ENCODE measurements at regions of chr20 and their contacts with region 1.

Region 1: DNA sequence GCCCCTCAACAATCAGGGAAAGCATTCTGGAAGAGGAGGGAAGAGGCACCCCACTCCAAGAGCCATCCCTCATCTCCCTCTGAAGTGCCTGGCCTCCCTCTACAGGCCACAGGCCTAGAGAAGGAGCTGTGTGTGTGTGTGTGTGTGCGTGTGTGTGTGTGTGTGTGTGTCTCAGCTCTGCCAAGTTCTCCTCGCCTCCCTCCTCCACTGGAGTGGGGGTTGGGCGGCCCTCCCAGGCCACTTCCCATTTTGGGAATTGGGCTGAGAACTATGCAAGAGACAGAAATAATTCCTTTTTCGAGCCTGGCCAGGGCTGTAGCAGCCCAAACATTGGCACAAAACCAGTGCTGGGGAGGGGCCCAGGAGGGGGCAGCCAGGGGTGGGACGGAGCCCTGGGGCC is 35.7 kb downstream of the KCNB1 start:
- DNase-seq: peak; percentile 86 to 92
- ATAC-seq: peak; percentile 81 to 97 (median 90)
- H3K4me3 ChIP-seq: no peak overlapping the region
- H3K27ac ChIP-seq: peak overlapping the region; percentile 38 to 83 (median 66)
- H3K4me1 ChIP-seq: peaks cover 15 to 51% (median 30%) of the 10 kb centered on the region in 9 donors
- H3K27me3 ChIP-seq: peaks cover 0 to 10% (median 0%) of the 10 kb centered on the region in 7 donors
- CTCF ChIP-seq: peak in 3 of 9 donors; percentile 20 to 44 (median 27)

Region 2: GRCh38 chr20:49122920-49123319 is 323.9 kb before region 1 on chr20:
- intact Hi-C with region 1: no loop called
- DNase-seq: no peak
- ATAC-seq: no peak
- H3K4me3 ChIP-seq: no peak overlapping the region
- H3K27ac ChIP-seq: no peak overlapping the region
- H3K4me1 ChIP-seq: no peaks in the 10 kb centered on the region
- H3K27me3 ChIP-seq: no peaks in the 10 kb centered on the region
- CTCF ChIP-seq: no peak

Region 3: GRCh38 chr20:49384437-49385088 is 62.2 kb before region 1 on chr20:
- intact Hi-C with region 1: loop called in 4 of 10 experiments (anchors 5 to 10 kb)
- DNase-seq: peak; percentile 75 to 81
- ATAC-seq: peak in 6 of 8 donors; percentile 29 to 76 (median 49)
- H3K4me3 ChIP-seq: no peak overlapping the region
- H3K27ac ChIP-seq: no peak overlapping the region
- H3K4me1 ChIP-seq: peaks cover 0 to 46% (median 16%) of the 10 kb centered on the region in 9 donors
- H3K27me3 ChIP-seq: no peaks in the 10 kb centered on the region
- CTCF ChIP-seq: peak; percentile 58 to 81 (median 72)

Region 4: GRCh38 chr20:49400410-49400809 is 46.4 kb before region 1 on chr20:
- intact Hi-C with region 1: loop called in 1 of 10 experiments (anchors 5 kb)
- DNase-seq: peak in 1 of 2 donors; percentile 26
- ATAC-seq: peak; percentile 37 to 91 (median 73)
- H3K4me3 ChIP-seq: no peak overlapping the region
- H3K27ac ChIP-seq: peak overlapping the region; percentile 56 to 89 (median 75)
- H3K4me1 ChIP-seq: peaks cover 12 to 46% (median 26%) of the 10 kb centered on the region in 9 donors
- H3K27me3 ChIP-seq: no peaks in the 10 kb centered on the region
- CTCF ChIP-seq: no peak

Region 5: GRCh38 chr20:49427751-49428518 is 18.9 kb before region 1 on chr20:
- intact Hi-C with region 1: loop called in 1 of 10 experiments (anchors 2 kb)
- DNase-seq: peak; percentile 37 to 59
- ATAC-seq: peak; percentile 14 to 89 (median 77)
- H3K4me3 ChIP-seq: peak overlapping the region in 4 of 10 donors; percentile 13 to 25 (median 20)
- H3K27ac ChIP-seq: peak overlapping the region; percentile 45 to 88 (median 78)
- H3K4me1 ChIP-seq: peaks cover 0 to 54% (median 28%) of the 10 kb centered on the region in 9 donors
- H3K27me3 ChIP-seq: no peaks in the 10 kb centered on the region
- CTCF ChIP-seq: no peak

Region 6: DNA sequence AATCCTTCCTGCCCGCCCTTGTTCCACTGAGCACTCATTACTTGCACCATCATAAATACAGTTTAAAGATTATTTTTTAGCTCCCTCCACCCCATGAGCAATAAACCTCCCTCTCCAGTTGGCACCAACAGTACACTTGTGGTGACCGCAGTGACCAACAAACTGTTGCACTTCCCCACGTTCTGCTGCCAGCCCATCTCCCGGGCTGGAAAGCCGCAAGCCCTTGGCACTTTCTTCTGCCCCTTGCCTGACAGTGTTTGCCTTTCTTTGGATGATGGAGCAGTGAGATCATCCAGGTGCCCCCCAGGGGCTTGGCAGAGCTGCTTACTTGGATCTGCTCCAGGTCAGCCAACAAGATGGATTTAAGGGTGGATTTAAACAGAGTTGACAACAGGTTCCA is 14.1 kb after region 1 on chr20:
- intact Hi-C with region 1: no loop called
- DNase-seq: no peak
- ATAC-seq: no peak
- H3K4me3 ChIP-seq: no peak overlapping the region
- H3K27ac ChIP-seq: no peak overlapping the region
- H3K4me1 ChIP-seq: peaks cover 0 to 6% (median 0%) of the 10 kb centered on the region in 9 donors
- H3K27me3 ChIP-seq: peaks cover 0 to 4% (median 0%) of the 10 kb centered on the region in 7 donors
- CTCF ChIP-seq: no peak

Region 7: GRCh38 chr20:49484180-49485140 is 37.7 kb after region 1 on chr20:
- intact Hi-C with region 1: loop called in 1 of 10 experiments (anchors 5 kb)
- DNase-seq: peak; percentile 71 to 82
- ATAC-seq: peak; percentile 88 to 94 (median 92)
- H3K4me3 ChIP-seq: peak overlapping the region in 9 of 10 donors; percentile 42 to 62 (median 54)
- H3K27ac ChIP-seq: no peak overlapping the region
- H3K4me1 ChIP-seq: peaks cover 3 to 25% (median 14%) of the 10 kb centered on the region in 9 donors
- H3K27me3 ChIP-seq: peaks cover 0 to 76% (median 26%) of the 10 kb centered on the region in 7 donors
- CTCF ChIP-seq: peak; percentile 62 to 94 (median 80)

Measured in heart right ventricle (tissue), 16 donors.